ENCODE measurements at regions of chr1 and their contacts with region 1.

Region 1: DNA sequence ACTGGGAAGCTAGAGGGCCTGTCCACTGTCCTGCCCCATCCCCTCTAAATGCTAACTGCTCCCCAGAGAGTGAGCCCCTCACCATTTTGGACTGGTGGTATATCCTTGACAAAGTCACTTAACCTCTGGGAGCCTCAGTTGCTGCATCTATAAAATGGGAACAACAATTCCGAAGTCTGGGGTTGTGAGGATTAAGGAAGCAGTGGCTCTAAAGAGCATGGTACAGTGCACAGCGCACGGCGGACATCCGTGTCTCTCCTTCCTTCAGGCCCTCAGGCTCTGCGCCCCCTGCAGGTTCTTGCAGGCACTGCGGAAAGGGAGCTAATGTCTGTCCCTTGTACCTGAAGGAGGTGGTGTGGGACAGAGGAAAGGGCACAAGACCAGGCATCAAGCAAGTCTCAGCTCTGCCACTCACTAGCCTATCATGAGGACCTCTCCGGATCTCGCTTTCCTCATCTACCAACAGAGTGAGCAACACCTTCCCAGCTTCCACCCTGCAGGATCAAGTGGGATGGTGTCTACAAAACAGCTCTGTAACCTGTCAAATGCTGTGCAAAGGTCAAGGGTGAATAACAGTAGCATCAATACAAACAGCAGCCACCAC is 20.1 kb downstream of the ECE1 start:
- DNase-seq: peak; percentile 84
- H3K4me3 ChIP-seq: no peak overlapping the region
- H3K27ac ChIP-seq: no peak overlapping the region
- H3K4me1 ChIP-seq: peaks cover 60% of the 10 kb centered on the region
- H3K27me3 ChIP-seq: no peaks in the 10 kb centered on the region
- CTCF ChIP-seq: peak; percentile 98
- POLR2A ChIP-seq: no peak

Region 2: DNA sequence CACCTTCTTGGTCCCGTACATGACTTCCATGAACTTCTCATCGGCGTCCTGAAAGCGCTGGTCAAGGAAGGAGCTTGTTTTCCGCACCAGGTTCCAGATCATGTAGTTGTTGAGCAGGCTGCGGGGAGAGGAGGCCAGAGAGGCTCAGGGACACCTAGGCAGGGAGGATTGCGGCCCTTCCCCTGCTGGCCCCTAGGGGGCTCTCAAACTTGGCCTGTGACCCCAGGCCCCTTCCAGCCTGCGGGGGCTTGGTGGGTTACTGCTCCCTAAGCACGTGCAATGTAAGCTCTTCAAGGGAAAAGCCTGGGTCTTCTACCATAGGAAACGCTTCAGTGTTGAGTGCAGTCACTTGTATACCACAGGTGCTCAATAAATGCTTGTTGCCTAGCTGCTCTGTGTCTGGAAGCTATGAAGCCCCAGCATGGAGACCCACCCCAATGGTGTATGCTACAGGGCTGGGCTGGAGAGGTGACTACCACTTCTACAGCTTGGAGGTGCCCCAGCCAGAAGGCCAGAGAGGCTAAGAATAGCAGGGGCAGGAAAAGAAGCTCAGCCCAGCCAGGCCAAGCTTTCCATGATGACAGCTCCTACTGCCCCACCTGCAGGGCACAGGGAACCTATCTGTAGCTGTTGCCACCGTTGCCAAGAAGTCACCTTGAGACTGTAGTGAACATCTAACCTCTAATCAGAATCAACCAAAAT is 25.1 kb before region 1 on chr1:
- CTCF ChIA-PET with region 1: interaction called, 11 read pairs
- POLR2A ChIA-PET with region 1: no interaction called
- dilution Hi-C with region 1: no loop called
- intact Hi-C with region 1: no loop called
- DNase-seq: no peak
- H3K4me3 ChIP-seq: no peak overlapping the region
- H3K27ac ChIP-seq: no peak overlapping the region
- H3K4me1 ChIP-seq: no peaks in the 10 kb centered on the region
- H3K27me3 ChIP-seq: no peaks in the 10 kb centered on the region
- CTCF ChIP-seq: peak; percentile 57 to 65
- POLR2A ChIP-seq: no peak

Region 3: DNA sequence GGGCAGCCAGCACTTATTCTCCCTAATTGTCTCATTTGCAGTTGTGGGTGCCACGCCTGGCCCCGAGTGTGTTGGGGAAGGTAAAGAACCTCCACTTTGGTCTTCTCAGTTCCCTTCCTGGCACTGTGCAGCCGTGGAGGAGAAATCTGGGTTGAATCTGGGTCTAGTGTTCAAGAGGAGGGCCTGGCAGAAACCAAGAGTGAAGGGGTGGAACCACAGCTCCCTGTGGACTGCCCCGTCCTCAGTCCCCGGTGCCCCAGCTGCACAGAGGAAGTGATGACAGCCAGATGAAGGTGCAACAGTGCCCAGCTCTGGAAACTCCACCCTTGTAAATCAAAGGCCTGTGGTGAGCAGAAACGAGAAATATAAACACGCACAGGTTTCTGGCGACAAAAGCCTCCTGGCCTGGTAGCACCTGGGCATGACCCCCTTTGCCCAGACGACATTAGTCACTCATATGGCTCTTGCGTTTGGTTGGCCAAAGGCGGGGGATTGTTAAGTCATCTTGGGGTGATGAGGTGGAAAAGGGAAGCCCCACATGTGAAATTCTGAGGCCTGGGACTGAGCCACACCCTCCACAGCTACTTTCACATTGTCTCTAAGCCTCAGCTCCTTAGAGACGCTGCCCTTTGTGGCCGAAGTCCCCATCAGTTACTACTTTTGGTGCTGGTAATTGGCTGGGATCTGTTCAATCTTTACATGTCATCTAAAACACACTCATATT is 24.2 kb after region 1 on chr1:
- CTCF ChIA-PET with region 1: interaction called, 34 read pairs
- POLR2A ChIA-PET with region 1: no interaction called
- dilution Hi-C with region 1: no loop called
- intact Hi-C with region 1: no loop called
- DNase-seq: no peak
- H3K4me3 ChIP-seq: no peak overlapping the region
- H3K27ac ChIP-seq: peak overlapping the region; percentile 36
- H3K4me1 ChIP-seq: peaks cover 33% of the 10 kb centered on the region
- H3K27me3 ChIP-seq: no peaks in the 10 kb centered on the region
- CTCF ChIP-seq: no peak
- POLR2A ChIP-seq: no peak

Region 4: GRCh38 chr1:21313203-21313885 is 43.2 kb after region 1 on chr1:
- CTCF ChIA-PET with region 1: interaction called, 13 read pairs
- POLR2A ChIA-PET with region 1: no interaction called
- dilution Hi-C with region 1: no loop called
- intact Hi-C with region 1: no loop called
- DNase-seq: peak; percentile 56
- H3K4me3 ChIP-seq: no peak overlapping the region
- H3K27ac ChIP-seq: no peak overlapping the region
- H3K4me1 ChIP-seq: peaks cover 28% of the 10 kb centered on the region
- H3K27me3 ChIP-seq: no peaks in the 10 kb centered on the region
- CTCF ChIP-seq: no peak
- POLR2A ChIP-seq: no peak

Region 5: DNA sequence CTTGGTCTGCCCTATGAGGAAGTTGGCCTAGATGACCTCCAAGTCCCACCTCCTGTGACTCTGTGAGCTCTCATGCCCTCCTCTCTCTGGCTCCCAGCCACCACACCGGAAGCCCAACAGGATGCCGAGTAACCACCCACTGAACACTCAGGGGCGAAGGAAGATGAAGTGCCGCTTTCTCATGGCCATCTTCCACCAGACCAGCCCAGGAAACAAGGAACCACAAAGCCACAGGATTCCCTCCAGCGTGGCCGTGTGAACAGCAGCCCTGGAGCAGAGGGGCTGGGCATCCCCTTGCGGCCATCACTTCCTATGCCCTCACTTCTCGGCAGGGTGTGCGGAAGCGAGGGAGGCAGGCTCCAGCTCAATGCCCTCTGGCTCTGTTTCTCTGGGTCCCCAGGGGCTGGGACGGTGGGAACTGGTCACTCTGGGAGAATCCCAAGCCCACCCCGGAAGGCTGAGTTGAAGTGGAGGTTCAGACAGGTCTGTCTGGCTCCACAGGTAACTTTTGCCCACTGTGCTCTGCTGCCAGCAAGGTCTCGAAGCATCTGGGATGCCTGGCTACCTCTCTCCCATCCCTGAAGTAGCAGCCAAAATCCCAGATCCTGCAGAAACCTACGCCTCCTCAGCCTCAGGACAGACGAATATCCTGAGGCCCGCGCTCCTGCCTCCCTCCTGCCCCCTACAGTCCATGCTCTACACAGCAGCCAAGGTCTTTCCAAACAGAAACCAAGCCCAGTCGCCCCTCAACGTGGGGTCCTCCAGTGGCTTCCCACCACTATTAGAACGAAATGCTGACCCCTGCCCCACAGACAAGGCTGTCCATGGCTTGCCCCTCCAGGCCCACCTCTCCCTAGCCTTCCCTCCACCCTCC is 64.3 kb after region 1 on chr1:
- CTCF ChIA-PET with region 1: interaction called, 55 read pairs
- POLR2A ChIA-PET with region 1: no interaction called
- dilution Hi-C with region 1: no loop called
- intact Hi-C with region 1: loop called (anchors 2 kb)
- DNase-seq: peak; percentile 75
- H3K4me3 ChIP-seq: peak overlapping the region in 1 of 3 experiments; percentile 10
- H3K27ac ChIP-seq: peak overlapping the region; percentile 81
- H3K4me1 ChIP-seq: peaks cover 73% of the 10 kb centered on the region
- H3K27me3 ChIP-seq: no peaks in the 10 kb centered on the region
- CTCF ChIP-seq: peak; percentile 82 to 89
- POLR2A ChIP-seq: peak; percentile 43

Measured in endothelial cell of umbilical vein (primary cell).